Activated CD4-positive, alpha-beta T cell treated with anti-CD3 and anti-CD28 coated beads for 36 hours (primary cell): ENCODE measurements at regions of chr15 and their contacts with region 1.

Region 1: DNA sequence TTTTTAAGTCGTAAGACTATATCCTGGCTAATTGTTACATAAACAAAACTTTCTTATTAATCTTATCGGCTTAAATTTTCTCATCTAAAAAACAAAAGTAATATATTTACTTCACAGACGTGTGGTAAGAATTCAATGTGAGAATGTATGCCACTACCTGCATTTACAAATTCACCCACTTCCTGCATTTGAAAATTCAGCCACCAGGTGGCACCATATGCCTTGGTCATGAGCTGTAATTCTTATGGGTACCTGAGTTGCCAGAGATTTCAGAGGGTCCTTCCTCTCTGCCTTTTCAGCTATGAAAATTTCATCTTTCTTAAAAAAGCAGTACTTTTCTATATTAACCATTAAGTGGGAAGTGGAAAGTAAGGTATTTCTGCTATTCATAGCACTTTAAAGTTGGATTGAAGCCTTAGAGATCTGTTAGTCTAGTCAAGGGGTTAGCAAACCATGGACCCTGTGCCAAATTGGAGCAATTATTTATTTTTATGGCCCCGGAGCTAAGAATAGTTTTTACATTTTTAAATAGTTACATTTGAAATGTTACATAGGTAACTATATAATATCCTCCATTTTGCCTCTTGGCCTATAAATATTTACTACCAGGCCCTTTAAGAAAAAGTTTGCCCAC is 127.8 kb downstream of the HCN4 start:
- DNase-seq: peak; percentile 84
- ATAC-seq: no peak
- H3K4me3 Mint-ChIP-seq: no peak overlapping the region
- H3K27ac Mint-ChIP-seq: no peak overlapping the region
- H3K4me1 Mint-ChIP-seq: no peaks in the 10 kb centered on the region
- H3K27me3 Mint-ChIP-seq: no peaks in the 10 kb centered on the region

Region 2: DNA sequence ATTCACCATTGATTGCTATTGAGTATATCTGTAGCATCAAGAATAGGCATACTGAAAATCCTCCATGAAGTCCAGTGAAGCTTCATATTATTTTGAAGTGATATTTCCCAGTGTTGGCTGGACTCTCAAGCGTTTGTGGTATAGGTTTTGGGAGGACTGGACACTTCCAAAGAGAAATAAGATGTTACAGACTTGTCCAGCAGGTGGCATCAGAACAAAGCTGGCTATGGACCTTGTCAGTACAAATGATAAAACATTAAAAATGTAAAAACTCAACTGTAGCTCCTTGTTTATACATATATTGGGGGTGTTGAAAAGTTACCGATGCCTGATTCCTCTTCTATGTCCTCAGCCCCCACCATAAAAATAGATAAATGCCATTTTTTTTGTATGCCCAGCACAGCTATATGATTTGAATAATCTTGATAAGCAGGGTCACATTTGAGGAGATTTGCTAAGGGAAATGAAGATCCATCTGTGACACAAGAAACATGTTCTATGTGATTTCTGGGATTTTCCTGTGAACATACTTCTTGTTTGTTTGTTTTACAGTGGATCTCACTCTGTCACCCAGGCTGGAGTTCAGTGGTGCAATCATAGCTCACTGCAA is 641.0 kb before region 1 on chr15:
- CTCF ChIA-PET with region 1: interaction called, 3 read pairs
- POLR2A ChIA-PET with region 1: no interaction called
- intact Hi-C with region 1: loop called in 1 of 2 experiments (anchors 10 kb)
- DNase-seq: peak; percentile 48
- ATAC-seq: peak; percentile 44
- H3K4me3 Mint-ChIP-seq: no peak overlapping the region
- H3K27ac Mint-ChIP-seq: no peak overlapping the region
- H3K4me1 Mint-ChIP-seq: no peaks in the 10 kb centered on the region
- H3K27me3 Mint-ChIP-seq: no peaks in the 10 kb centered on the region

Region 3: DNA sequence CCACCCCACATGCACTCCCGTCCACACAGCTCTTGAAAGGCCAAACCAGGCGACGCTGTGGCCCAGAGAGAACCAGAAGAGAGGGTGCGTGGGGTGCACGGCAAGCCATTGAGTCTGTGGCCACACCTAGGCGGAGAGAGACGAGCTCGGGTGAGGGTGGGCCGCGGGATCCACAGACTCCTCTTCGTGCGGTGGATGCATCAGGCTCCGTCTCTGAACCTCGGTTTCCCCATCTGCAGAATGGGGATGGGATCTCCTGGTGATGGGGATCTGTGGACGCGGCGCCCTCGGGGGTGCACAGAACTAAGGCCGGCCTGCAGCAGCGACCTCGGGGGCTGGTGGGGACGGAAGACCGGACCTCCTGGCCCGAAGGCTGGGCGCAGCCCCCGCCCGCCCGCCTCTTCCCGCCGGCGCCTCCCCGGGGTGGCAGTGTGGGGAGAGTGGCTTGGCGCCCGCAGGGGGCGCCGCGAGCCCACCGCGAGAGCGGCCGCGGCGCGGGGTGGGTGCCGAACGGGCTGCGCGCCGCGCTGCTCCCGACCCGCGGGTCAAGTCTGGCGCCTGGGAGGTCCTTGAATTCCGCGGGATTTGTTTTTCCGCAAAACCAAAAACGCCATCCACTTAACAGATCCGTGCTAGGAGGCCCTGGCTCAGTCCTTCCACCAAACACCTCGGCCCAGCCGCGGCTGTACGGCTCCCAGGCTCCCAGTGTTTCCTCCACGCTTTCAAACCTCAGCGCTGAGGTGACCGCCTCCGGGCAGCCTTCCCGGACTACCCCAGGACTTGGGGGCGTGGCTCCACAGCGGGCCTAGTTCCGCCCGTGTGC is 444.3 kb before region 1 on chr15:
- CTCF ChIA-PET with region 1: interaction called, 3 read pairs
- POLR2A ChIA-PET with region 1: no interaction called
- intact Hi-C with region 1: loop called (anchors 5 to 10 kb)
- DNase-seq: peak; percentile 58
- ATAC-seq: peak; percentile 82
- H3K4me3 Mint-ChIP-seq: peak overlapping the region; percentile 67
- H3K27ac Mint-ChIP-seq: no peak overlapping the region
- H3K4me1 Mint-ChIP-seq: peaks cover 9% of the 10 kb centered on the region
- H3K27me3 Mint-ChIP-seq: peaks cover 24% of the 10 kb centered on the region

Region 4: GRCh38 chr15:73265536-73266153 is 24.7 kb after region 1 on chr15:
- CTCF ChIA-PET with region 1: interaction called, 83 read pairs
- POLR2A ChIA-PET with region 1: no interaction called
- intact Hi-C with region 1: loop called in 1 of 2 experiments (anchors 1 kb)
- DNase-seq: peak; percentile 72
- ATAC-seq: peak; percentile 87
- H3K4me3 Mint-ChIP-seq: no peak overlapping the region
- H3K27ac Mint-ChIP-seq: no peak overlapping the region
- H3K4me1 Mint-ChIP-seq: peaks cover 3% of the 10 kb centered on the region
- H3K27me3 Mint-ChIP-seq: no peaks in the 10 kb centered on the region

Region 5: DNA sequence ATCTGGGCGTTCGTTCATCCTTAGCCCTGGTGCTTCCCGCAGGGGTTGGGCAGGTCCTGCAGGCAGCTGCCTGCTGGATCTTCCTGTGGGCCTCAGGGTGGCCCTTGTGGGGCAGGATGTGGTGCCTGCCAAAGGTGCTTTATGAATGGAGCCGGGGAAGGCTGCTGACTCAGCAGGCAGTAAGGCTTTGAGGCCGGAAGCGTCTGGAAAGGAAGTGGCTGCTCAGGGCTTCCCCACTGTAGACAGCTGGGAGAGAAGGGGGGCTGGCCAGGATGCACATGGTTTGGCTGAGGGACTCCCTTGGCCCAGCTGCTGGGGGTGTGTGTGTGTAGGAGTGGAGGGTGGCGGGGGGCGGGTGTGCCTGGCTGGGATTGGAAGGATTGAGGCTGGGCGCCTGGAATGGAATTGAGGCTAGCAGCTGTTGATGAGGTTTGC is 456.1 kb after region 1 on chr15:
- CTCF ChIA-PET with region 1: interaction called, 10 read pairs
- POLR2A ChIA-PET with region 1: no interaction called
- intact Hi-C with region 1: loop called (anchors 1 to 2 kb)
- DNase-seq: peak; percentile 90
- ATAC-seq: peak; percentile 96
- H3K4me3 Mint-ChIP-seq: peak overlapping the region; percentile 39
- H3K27ac Mint-ChIP-seq: peak overlapping the region; percentile 56
- H3K4me1 Mint-ChIP-seq: peaks cover 25% of the 10 kb centered on the region
- H3K27me3 Mint-ChIP-seq: peaks cover 44% of the 10 kb centered on the region